A673 (cell line): ENCODE measurements at regions of chr18 and their contacts with region 1.

Region 1: DNA sequence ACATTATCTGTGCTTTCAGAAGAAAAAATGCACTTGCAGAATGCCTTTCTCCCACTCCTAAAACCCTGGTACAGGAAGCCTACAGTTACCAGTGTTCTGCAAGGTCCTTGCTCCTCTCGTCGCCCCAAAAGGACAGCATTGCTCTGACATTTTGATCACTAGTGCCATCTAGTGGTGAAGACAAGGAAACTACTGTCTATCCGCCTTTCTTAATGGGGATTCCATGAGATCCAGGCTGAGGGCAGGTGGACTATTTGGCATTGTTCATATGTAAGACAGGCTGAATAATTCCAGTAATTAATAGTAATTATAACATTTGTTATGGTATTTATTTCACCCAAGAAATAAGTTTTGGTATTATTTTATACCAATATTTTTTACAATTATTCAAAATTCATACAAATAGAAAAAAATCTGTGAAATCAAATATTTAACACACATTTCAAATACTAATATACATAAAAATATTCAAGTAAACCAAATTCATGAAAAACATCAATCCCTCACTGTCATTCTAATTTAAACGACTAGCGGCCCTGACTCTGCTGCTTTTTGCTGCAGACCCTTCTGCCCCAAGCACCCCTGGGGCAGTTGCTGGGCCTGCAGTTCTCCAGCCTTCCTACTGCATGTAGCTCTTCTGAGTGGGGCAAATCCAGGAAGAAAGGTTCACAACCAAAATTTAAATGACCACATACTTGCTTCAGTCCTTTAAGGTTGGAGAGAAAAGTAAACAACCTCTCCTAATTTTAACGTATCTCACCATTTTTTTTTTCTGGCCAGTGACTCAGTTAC is 19.0 kb downstream of the TPGS2 start:
- DNase-seq: peak; percentile 85
- H3K4me3 ChIP-seq: no peak overlapping the region
- H3K27ac ChIP-seq: no peak overlapping the region
- H3K4me1 ChIP-seq: no peaks in the 10 kb centered on the region
- H3K27me3 ChIP-seq: no peaks in the 10 kb centered on the region
- CTCF ChIP-seq: peak; percentile 80

Region 2: GRCh38 chr18:36688020-36688965 is 121.5 kb before region 1 on chr18:
- CTCF ChIA-PET with region 1: no interaction called
- POLR2A ChIA-PET with region 1: no interaction called
- intact Hi-C with region 1: loop called (anchors 1 kb)
- DNase-seq: peak; percentile 73
- H3K4me3 ChIP-seq: no peak overlapping the region
- H3K27ac ChIP-seq: no peak overlapping the region
- H3K4me1 ChIP-seq: no peaks in the 10 kb centered on the region
- H3K27me3 ChIP-seq: peaks cover 37% of the 10 kb centered on the region
- CTCF ChIP-seq: peak; percentile 84

Region 3: GRCh38 chr18:36769611-36770314 is 40.0 kb before region 1 on chr18:
- CTCF ChIA-PET with region 1: no interaction called
- POLR2A ChIA-PET with region 1: no interaction called
- intact Hi-C with region 1: no loop called
- DNase-seq: peak; percentile 35
- H3K4me3 ChIP-seq: no peak overlapping the region
- H3K27ac ChIP-seq: no peak overlapping the region
- H3K4me1 ChIP-seq: peaks cover 15% of the 10 kb centered on the region
- H3K27me3 ChIP-seq: no peaks in the 10 kb centered on the region
- CTCF ChIP-seq: peak; percentile 72

Region 4: DNA sequence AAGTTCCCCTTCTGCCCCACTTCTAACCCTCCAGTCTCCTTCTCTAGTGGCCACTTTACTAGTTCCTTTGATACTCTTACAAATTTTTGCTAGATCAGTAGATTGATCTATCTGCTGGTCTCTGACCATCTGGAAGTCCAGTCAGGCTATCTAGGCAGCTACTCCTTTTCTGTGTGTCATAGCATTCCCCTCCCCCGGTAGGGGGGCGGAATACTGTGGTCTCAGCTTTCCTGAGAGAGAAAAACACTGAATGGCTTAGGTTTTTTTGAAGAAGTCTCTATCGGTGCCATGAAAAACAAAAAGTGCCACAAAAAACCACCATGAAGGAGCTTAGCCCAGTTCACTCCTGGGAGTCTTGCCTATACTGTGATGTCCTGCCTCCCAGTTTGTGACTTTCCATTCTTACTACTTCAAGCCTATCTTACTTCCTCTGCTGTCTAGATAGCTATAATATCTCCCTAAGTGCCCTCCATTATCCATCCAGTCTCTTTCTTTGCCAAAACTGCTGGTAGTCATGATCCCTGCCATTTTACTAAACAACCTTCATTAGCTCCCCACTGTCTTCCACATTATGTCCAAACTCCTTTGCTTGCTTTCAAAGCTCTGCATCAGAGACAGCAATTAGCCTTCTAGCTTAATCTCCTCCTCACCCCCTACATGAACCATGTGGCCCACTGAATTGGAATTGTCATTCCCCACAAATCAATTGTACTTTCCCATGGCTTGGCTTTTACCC is 10.9 kb before region 1 on chr18:
- CTCF ChIA-PET with region 1: no interaction called
- POLR2A ChIA-PET with region 1: no interaction called
- intact Hi-C with region 1: no loop called
- DNase-seq: no peak
- H3K4me3 ChIP-seq: no peak overlapping the region
- H3K27ac ChIP-seq: no peak overlapping the region
- H3K4me1 ChIP-seq: no peaks in the 10 kb centered on the region
- H3K27me3 ChIP-seq: no peaks in the 10 kb centered on the region
- CTCF ChIP-seq: no peak